Activated CD8-positive, alpha-beta T cell treated with anti-CD3 and anti-CD28 coated beads, Interleukin-2, amount 10 ng/mL, durations not matched to agents 7 days and 5 days (primary cell): ENCODE measurements at regions of chr5 and their contacts with region 1.

Region 1: DNA sequence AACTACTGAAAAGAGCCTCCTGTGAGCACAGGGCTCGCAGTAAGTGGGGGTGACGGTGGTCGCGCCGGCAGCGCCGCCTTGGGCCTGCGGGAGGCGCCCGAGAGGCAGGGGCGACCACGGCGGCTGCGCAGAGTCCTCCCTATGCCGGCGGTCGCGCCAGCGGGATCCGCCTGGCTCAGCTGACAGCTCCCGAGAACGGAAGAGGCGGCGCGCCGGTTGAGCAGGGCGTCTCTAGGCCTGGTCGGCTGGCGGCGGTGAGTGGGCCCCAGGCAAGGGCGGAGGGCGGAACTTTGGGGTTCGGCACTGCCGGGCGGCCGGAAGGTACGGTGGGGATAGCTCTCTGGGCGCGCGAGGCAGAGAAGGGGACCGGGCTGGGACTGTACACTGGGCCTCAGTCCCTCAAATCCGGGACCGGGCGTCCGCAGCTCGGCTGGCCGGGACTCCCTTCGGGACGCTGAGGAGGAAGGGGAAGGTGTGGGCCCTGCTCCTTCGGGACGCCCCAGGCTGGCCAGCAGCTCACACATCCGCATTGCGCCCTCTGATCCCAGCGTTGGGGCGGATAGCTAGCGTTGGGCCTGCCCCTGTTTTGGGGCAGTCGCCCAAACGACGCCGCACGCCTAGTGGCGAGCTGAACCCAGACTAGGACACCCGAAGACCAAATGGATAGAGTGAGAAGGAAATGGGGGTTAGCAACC is at the start of gene RNF14:
- DNase-seq: peak; percentile 96
- ATAC-seq: peak; percentile 98
- H3K4me3 Mint-ChIP-seq: peak within 1 kb of the TSS; percentile 92
- H3K27ac Mint-ChIP-seq: peak within 1 kb of the TSS; percentile 95
- H3K4me1 Mint-ChIP-seq: peaks cover 33% of the 10 kb centered on the region
- H3K27me3 Mint-ChIP-seq: no peaks in the 10 kb centered on the region
- total RNA-seq, gene RNF14: 22.2 to 26.0 TPM

Region 2: DNA sequence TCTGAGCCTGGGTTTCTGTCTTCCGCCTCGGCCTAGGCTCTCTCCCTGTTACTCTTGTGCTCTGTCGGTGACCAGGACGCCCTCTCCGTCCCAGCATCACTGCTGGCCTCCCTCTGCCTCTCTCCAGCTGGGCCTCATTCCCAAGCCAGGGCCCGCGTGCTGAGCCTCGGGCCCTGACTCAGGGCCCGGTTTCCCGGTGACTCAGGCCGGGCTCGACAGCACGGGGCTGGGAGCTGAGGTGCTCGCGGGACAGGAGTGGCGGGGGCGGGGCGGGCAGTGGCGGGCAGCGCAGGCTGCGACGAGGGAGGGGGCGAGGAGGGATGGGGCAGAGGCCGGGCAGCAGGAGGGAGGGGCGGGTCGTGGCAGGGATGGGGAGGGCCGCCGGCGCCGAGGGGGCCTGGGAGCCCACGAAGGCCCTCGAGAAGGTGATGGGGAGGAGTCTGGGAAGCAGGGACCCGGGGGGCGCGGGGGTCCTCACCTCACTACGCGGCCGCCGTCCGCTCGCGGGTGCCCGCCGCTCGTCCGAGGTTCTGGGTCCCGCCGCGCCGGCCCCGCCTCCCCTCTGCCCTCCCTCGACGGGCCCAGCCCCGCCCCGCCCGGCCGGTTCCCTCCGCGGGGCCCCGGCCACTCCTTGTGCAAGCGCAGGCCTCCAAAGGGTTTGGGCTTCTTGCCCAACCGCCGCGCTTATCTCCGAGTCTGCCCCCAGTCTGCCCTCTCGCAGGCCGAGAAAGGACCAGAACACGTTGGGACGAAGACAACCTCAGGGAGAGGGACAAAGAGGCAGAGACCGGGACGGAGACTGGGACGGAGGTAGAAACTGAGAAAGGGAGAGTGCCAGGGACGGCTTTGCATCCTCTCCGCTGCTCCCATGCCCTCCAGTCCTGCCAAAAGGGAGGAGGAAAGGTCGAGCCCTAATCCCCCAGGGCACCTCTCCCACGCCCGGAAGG is 287.1 kb before region 1 on chr5 and contains the start of gene ARAP3:
- CTCF ChIA-PET with region 1: interaction called, 16 read pairs
- POLR2A ChIA-PET with region 1: interaction called, 3 read pairs
- DNase-seq: peak; percentile 54
- ATAC-seq: peak; percentile 86
- H3K4me3 Mint-ChIP-seq: peak within 1 kb of the TSS; percentile 79
- H3K27ac Mint-ChIP-seq: peak within 1 kb of the TSS; percentile 82
- H3K4me1 Mint-ChIP-seq: peaks cover 38% of the 10 kb centered on the region
- H3K27me3 Mint-ChIP-seq: peaks cover 3% of the 10 kb centered on the region
- total RNA-seq, gene ARAP3: 8.5 to 8.8 TPM

Region 3: GRCh38 chr5:141701360-141702119 is 267.5 kb before region 1 on chr5:
- CTCF ChIA-PET with region 1: interaction called, 12 read pairs
- POLR2A ChIA-PET with region 1: interaction called, 3 read pairs
- DNase-seq: no peak
- ATAC-seq: peak; percentile 25
- H3K4me3 Mint-ChIP-seq: peak overlapping the region; percentile 71
- H3K27ac Mint-ChIP-seq: no peak overlapping the region
- H3K4me1 Mint-ChIP-seq: peaks cover 17% of the 10 kb centered on the region
- H3K27me3 Mint-ChIP-seq: peaks cover 46% of the 10 kb centered on the region

Region 4: DNA sequence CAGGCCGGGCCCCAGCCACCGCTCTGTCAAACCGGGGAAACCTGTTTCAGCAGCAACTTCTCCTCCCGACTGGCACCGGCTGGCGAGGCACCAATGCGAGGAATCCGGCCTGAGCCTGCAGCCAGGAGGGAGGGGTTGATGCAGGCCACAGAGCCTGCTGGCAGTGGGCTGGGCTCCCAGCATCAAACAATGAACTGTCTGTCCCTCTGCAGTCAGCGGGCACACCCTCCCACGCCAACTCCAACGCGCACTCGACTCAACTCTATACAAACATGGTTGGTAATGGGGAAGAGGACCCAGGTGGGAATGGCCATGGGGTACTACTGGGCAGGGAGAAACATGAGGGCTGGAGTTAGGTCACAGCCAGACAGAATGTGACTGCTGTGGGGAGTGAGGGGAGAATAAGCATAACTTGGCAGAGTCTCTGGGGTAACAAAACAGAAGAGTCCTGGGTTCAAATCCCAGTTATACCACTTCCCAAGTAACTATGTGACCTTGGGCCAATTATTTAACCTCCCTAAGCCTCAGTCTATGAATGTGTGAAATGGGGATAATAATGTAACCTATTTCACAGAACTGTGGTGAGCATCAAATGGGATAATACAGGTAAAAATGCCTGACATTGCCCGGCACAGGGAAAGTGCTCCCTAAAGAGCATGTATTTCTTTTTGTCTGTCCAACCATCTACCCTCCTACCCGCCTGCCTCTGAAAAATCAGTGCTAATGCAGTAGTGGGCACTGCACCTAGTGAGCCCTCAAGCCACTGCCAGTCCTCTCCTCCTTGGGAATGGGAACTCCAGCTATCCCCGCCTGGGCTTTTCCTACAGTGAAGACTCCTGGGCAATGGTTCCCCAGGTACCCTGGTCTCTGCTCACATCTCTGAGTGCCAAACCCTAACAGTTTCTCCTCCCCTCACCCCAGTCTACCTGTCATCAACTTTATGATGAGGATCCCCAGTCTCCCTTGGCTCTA is 102.6 kb before region 1 on chr5:
- CTCF ChIA-PET with region 1: no interaction called
- POLR2A ChIA-PET with region 1: no interaction called
- DNase-seq: no peak
- ATAC-seq: no peak
- H3K4me3 Mint-ChIP-seq: no peak overlapping the region
- H3K27ac Mint-ChIP-seq: no peak overlapping the region
- H3K4me1 Mint-ChIP-seq: no peaks in the 10 kb centered on the region
- H3K27me3 Mint-ChIP-seq: peaks cover 14% of the 10 kb centered on the region

Region 5: DNA sequence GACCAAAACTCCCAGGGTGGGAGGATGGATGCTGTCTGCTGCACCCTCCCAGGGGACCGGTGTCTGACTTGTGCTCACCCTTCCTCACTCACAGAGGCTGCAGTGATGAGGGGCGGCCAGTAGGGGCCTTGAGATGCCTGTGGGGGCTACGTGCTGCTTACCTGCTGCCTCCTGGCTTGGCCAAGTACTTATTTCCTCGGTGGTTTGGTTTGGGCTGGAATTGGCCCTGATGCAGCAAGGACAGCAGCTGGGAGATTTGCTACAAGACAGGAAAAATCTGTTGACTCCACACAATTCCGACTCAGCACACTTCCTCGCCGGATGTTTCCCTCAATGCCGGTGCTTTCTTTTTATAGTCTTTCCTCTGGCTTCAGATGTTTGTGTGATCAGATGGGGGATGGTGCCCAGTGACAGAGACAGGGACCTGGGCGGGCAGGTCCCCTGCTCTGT is 17.7 kb before region 1 on chr5:
- CTCF ChIA-PET with region 1: interaction called, 186 read pairs
- POLR2A ChIA-PET with region 1: interaction called, 30 read pairs
- DNase-seq: peak; percentile 49
- ATAC-seq: peak; percentile 82
- H3K4me3 Mint-ChIP-seq: no peak overlapping the region
- H3K27ac Mint-ChIP-seq: peak overlapping the region; percentile 37
- H3K4me1 Mint-ChIP-seq: peaks cover 27% of the 10 kb centered on the region
- H3K27me3 Mint-ChIP-seq: no peaks in the 10 kb centered on the region

Region 6: DNA sequence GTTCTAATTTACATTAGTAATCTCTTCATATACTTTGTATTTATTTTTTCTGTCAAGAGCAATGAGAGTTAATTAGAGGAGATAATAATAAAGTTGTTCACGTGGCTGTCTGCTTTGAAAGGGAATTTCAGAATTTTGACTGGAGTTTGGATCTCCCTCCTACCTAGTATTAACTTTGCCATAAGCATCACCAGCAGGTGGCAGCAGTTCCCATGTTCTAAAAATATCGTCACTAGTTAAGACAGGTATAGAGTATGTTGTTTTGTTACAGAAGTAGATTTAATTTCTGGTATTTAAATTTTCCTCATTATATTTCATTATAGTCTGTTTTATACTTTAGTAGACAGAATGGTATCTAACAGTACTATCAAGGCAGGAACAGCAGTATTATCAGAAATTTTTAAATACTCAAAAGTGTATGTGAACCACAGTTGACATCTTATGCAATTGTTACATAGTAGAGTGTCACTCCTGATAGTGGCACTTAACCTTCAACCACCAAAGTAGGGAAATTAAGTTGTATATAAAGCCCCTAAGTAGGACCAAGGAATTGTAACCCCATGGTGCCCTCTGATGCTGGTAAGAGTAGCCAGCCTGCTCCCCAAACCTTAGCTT is 23.4 kb after region 1 on chr5:
- CTCF ChIA-PET with region 1: interaction called, 76 read pairs
- POLR2A ChIA-PET with region 1: no interaction called
- DNase-seq: peak; percentile 87
- ATAC-seq: peak; percentile 91
- H3K4me3 Mint-ChIP-seq: no peak overlapping the region
- H3K27ac Mint-ChIP-seq: no peak overlapping the region
- H3K4me1 Mint-ChIP-seq: peaks cover 3% of the 10 kb centered on the region
- H3K27me3 Mint-ChIP-seq: no peaks in the 10 kb centered on the region

Region 7: GRCh38 chr5:142012792-142013388 is 43.8 kb after region 1 on chr5 and contains the start of gene GNPDA1:
- CTCF ChIA-PET with region 1: interaction called, 79 read pairs
- POLR2A ChIA-PET with region 1: interaction called, 16 read pairs
- DNase-seq: peak; percentile 74
- ATAC-seq: peak; percentile 53
- H3K4me3 Mint-ChIP-seq: peak within 1 kb of the TSS; percentile 82
- H3K27ac Mint-ChIP-seq: peak within 1 kb of the TSS; percentile 93
- H3K4me1 Mint-ChIP-seq: peaks cover 85% of the 10 kb centered on the region
- H3K27me3 Mint-ChIP-seq: no peaks in the 10 kb centered on the region
- total RNA-seq, gene GNPDA1: 34.9 to 41.0 TPM

Region 8: GRCh38 chr5:142145106-142145900 is 176.2 kb after region 1 on chr5:
- CTCF ChIA-PET with region 1: interaction called, 85 read pairs
- POLR2A ChIA-PET with region 1: interaction called, 9 read pairs
- DNase-seq: peak; percentile 80
- ATAC-seq: peak; percentile 89
- H3K4me3 Mint-ChIP-seq: no peak overlapping the region
- H3K27ac Mint-ChIP-seq: no peak overlapping the region
- H3K4me1 Mint-ChIP-seq: peaks cover 3% of the 10 kb centered on the region
- H3K27me3 Mint-ChIP-seq: no peaks in the 10 kb centered on the region